ENCODE measurements at regions of chr9 and their contacts with region 1.

Region 1: GRCh38 chr9:82972446-82972845 is 90.5 kb downstream of the RASEF start:
- DNase-seq: no peak
- ATAC-seq: no peak
- H3K4me3 ChIP-seq: no peak overlapping the region
- H3K4me3 Mint-ChIP-seq: no peak overlapping the region
- H3K27ac ChIP-seq: no peak overlapping the region
- H3K27ac Mint-ChIP-seq: no peak overlapping the region
- H3K4me1 ChIP-seq: no peaks in the 10 kb centered on the region
- H3K4me1 Mint-ChIP-seq: no peaks in the 10 kb centered on the region
- H3K27me3 ChIP-seq: no peaks in the 10 kb centered on the region
- H3K27me3 Mint-ChIP-seq: no peaks in the 10 kb centered on the region
- CTCF ChIP-seq: no peak

Region 2: GRCh38 chr9:82912645-82913044 is 59.8 kb before region 1 on chr9:
- CTCF ChIA-PET with region 1: no interaction called
- POLR2A ChIA-PET with region 1: no interaction called
- intact Hi-C with region 1: loop called in 1 of 2 experiments (anchors 10 kb)
- DNase-seq: no peak
- ATAC-seq: no peak
- H3K4me3 ChIP-seq: no peak overlapping the region
- H3K4me3 Mint-ChIP-seq: no peak overlapping the region
- H3K27ac ChIP-seq: no peak overlapping the region
- H3K27ac Mint-ChIP-seq: no peak overlapping the region
- H3K4me1 ChIP-seq: no peaks in the 10 kb centered on the region
- H3K4me1 Mint-ChIP-seq: no peaks in the 10 kb centered on the region
- H3K27me3 ChIP-seq: no peaks in the 10 kb centered on the region
- H3K27me3 Mint-ChIP-seq: no peaks in the 10 kb centered on the region
- CTCF ChIP-seq: no peak

Region 3: DNA sequence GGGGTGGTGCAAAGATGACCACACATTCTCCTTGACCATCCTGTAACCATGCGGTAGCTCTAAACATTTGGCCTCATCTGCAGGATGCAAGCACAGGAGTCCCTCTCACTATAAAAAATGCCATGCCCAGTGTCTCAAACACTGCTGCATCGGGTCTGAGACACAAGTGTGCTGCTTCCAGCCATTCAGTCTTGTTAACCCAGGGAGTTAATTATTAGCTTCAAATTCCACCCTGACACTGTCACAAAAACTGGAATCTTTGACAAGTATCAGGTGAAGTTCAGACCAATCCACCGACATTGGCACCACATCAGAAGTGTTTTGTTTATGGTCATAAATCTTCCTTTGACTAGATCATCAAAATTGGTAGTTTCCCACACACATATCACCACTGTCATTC is 209.6 kb after region 1 on chr9:
- CTCF ChIA-PET with region 1: no interaction called
- POLR2A ChIA-PET with region 1: no interaction called
- intact Hi-C with region 1: no loop called
- DNase-seq: no peak
- ATAC-seq: no peak
- H3K4me3 ChIP-seq: no peak overlapping the region
- H3K4me3 Mint-ChIP-seq: no peak overlapping the region
- H3K27ac ChIP-seq: no peak overlapping the region
- H3K27ac Mint-ChIP-seq: no peak overlapping the region
- H3K4me1 ChIP-seq: no peaks in the 10 kb centered on the region
- H3K4me1 Mint-ChIP-seq: no peaks in the 10 kb centered on the region
- H3K27me3 ChIP-seq: no peaks in the 10 kb centered on the region
- H3K27me3 Mint-ChIP-seq: peaks cover 4% of the 10 kb centered on the region
- CTCF ChIP-seq: no peak

Region 4: DNA sequence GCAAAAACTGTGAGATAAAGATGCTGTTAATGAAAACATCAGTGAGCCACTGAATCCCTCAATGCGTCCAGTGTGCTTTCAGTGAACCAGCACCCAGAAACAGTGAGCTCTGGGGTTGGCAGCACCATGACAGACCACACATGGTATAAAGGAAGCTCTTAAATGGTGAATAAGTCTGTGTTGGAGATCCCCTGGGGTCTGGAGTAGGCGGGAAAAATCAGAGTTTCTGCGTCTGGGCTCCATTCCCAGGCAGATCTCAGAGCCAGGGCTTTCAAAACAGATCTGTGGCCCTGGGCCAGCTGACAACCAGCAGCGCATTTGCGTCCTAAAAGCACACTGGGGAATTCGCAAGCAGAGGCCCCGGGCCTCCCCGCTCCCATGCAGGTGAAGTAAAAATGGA is 332.2 kb after region 1 on chr9:
- CTCF ChIA-PET with region 1: no interaction called
- POLR2A ChIA-PET with region 1: no interaction called
- intact Hi-C with region 1: no loop called
- DNase-seq: no peak
- ATAC-seq: no peak
- H3K4me3 ChIP-seq: no peak overlapping the region
- H3K4me3 Mint-ChIP-seq: no peak overlapping the region
- H3K27ac ChIP-seq: no peak overlapping the region
- H3K27ac Mint-ChIP-seq: no peak overlapping the region
- H3K4me1 ChIP-seq: no peaks in the 10 kb centered on the region
- H3K4me1 Mint-ChIP-seq: no peaks in the 10 kb centered on the region
- H3K27me3 ChIP-seq: no peaks in the 10 kb centered on the region
- H3K27me3 Mint-ChIP-seq: no peaks in the 10 kb centered on the region
- CTCF ChIP-seq: no peak

Measured in CD4-positive, alpha-beta T cell (primary cell).